ENCODE measurements at regions of chr5 and their contacts with region 1.

Region 1: DNA sequence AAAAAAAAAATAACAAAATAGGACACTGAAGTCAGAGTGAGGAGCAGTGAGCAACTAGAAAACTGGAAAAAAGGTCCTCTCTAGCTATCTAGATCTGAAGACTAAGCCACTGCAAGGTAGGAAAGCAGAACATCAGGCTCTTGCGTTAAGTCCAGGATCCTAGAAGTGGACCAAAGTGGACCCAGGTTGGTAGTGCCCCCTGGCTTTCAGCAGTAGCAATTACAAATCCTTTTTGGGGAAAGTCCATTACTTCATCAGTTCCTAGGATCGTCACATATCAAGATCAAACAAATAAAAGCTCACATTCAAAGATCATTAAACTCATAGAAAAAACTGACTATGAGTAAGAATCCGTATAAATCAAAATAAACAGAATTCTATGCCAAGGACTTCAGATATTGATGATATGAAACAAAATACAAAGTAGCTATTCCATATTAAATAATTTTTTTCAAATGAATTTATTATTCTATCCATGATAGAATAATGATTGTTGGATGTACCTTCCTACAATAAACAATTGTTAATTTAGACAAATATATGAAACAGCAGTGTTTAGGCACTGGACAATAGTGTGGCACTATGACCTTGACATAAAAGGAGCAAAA is 6.5 kb upstream of the RICTOR start:
- DNase-seq: peak; percentile 84

Region 2: DNA sequence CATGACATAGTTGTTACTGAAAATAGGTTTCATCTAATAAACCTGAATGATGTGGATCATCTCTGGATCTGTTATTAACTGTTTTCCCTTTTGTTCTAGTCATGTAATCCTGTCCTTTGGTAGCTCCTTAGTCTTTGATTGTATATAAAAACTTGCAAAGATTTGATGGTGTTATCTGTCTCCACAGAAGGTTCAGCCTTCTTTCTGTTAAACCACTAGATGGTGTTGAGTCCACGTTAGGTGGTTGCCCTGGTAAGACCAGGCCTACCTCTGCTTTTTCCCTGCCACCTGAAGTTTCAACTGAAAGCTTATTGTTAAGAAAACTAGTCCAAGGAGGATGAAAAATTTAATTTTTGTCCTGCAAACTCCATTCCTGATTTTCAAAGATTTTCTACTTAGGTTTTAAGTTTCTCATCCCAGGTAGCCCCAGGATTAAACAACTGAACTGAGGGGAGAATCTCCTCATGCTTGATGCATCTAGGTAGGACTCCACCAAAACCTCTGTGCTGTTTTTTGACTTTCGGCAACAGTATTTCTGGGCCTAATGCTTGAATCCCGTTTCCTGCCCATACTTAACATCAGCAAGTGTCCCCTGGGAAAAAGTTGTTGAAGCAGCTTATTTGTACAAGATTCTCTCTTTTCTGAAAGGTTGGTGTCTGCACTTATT is 75.0 kb before region 1 on chr5:
- intact Hi-C with region 1: loop called (anchors 2 kb)
- DNase-seq: no peak